ENCODE measurements at regions of chr5 and their contacts with region 1.

Region 1: DNA sequence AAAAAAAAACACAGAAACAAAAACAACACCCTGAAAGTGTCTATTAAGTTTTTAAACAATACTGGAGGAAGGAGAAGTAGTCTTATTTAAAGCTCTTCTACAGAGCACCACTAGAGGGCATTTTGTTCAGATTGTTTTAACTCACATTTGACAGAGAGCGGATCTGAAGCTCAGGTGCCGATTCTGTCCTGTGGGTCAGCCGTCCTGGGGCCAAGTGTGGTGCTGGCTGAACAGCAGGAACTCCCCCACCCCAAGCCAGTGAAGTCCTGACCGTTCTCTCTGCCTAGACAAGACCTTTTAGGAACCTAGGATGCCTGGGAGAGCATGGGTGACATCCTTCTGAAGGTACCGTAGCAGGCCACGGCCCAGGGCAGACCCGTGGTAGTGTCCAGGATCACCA is 3.9 kb downstream of the EXOC3 start:
- DNase-seq: peak; percentile 58
- H3K4me3 ChIP-seq: no peak overlapping the region
- H3K27ac ChIP-seq: no peak overlapping the region
- H3K4me1 ChIP-seq: peaks cover 0 to 17% of the 10 kb centered on the region in 2 experiments; a peak in 1 of 4 replicates
- H3K27me3 ChIP-seq: no peaks in the 10 kb centered on the region
- CTCF ChIP-seq: peak; percentile 69
- EP300 ChIP-seq: no peak
- RAD21 ChIP-seq: peak; percentile 28; the same call in 1 of the 2 replicates

Region 2: DNA sequence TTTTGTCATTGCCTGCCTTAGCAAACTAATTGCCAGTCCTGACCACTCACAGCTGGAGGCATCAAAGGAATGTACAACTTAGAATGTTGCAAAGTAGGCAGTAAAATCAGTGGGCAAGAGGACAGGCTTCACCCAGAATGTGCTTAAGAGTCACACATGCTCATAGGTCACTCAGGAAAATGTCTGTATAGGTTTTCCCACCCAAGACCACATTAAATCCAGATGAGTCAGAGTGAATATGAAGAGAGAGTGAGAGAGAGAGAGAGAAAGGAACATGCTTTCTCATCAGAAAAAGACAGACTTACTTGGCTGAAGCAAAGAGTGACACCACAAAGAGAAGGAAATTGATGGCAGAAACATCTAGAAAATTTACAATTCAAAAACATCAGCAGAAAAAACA is 317.0 kb before region 1 on chr5:
- CTCF ChIA-PET with region 1: no interaction called
- POLR2A ChIA-PET with region 1: no interaction called
- DNase-seq: no peak
- H3K4me3 ChIP-seq: no peak overlapping the region
- H3K27ac ChIP-seq: no peak overlapping the region
- H3K4me1 ChIP-seq: no peaks in the 10 kb centered on the region
- H3K27me3 ChIP-seq: no peaks in the 10 kb centered on the region
- CTCF ChIP-seq: no peak
- EP300 ChIP-seq: no peak
- RAD21 ChIP-seq: no peak

Region 3: DNA sequence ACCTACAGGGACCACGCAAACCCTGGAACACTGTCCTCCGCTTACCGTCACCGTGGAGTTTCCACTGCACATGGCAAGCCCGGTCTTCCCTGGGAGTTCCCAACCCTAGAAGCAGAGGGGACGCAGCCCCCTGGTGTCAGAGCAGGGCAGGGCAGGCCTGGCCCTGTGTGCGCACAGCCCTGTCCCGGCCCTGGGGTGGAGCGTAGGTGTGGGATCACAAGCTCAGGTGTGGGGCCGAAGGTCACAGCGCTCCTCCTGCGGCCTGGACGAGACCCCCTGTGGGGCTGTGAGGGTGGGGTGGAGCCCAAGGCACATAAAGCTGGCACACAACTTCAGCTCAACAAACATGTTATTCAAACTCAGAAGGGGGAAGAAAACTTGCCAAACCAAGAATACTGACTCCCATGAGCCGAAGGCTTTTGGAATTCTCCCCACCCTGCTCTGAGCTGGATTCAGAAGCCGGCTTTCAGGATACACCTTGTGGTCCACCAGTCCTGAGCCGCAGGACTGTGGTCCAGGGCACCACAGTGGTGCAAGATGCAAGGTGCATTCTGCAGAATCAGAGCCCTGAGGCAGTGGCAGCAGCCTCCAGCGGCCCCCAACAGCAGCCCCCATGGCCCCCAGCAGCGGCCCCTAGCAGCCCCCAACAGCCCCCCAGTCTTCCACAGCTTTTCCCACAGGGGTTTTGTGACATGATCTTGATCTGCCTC is 15.7 kb before region 1 on chr5:
- CTCF ChIA-PET with region 1: interaction called, 10 read pairs
- POLR2A ChIA-PET with region 1: no interaction called
- DNase-seq: peak; percentile 93
- H3K4me3 ChIP-seq: no peak overlapping the region; a peak in 1 of 4 replicates
- H3K27ac ChIP-seq: no peak overlapping the region
- H3K4me1 ChIP-seq: peaks cover 0 to 3% of the 10 kb centered on the region in 2 experiments; a peak in 1 of 4 replicates
- H3K27me3 ChIP-seq: no peaks in the 10 kb centered on the region
- CTCF ChIP-seq: peak; percentile 63
- EP300 ChIP-seq: no peak
- RAD21 ChIP-seq: peak; percentile 75

Region 4: DNA sequence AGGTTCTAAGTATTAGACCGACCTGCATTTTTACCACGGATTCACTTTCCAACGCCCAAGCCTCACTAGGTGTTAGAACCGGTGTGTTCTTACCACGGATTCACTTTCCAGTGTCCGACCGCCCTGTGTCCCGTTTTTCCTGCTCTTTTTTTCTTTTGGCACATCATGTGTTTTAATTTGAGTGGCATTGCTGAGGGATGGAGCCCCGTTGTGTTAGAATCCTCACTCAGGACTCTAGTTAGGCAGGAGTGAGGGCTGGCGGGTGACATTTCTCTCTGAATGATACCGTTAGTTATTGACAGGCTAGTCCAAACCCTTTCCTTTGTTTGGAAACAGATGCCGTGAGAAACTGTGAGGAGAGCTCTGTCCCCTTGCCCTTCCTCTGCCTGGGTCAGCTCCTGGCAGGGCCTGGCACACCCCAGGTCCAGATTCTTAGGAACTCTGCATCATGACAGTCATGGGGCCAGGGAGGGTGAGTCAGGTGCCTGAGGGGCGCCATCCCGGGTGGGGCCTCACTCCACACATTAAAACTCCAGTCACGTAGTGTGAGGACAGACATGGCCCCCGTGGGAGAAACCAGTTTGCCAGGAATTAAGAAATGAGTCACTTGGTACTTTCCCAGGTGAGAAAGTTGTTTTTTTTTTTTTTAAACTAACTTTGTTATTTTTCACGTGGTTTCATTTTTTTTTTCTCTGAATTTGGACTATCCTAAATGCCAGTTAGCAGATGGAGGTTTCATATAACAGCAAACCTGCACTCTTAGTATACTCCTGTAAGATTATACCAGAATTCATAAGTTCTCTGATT is 11.9 kb after region 1 on chr5:
- CTCF ChIA-PET with region 1: interaction called, 14 read pairs
- POLR2A ChIA-PET with region 1: no interaction called
- DNase-seq: no peak
- H3K4me3 ChIP-seq: no peak overlapping the region
- H3K27ac ChIP-seq: no peak overlapping the region
- H3K4me1 ChIP-seq: no peaks in the 10 kb centered on the region
- H3K27me3 ChIP-seq: no peaks in the 10 kb centered on the region
- CTCF ChIP-seq: no peak
- EP300 ChIP-seq: no peak
- RAD21 ChIP-seq: no peak

Region 5: GRCh38 chr5:472656-473553 is 26.0 kb after region 1 on chr5:
- CTCF ChIA-PET with region 1: interaction called, 10 read pairs
- POLR2A ChIA-PET with region 1: no interaction called
- DNase-seq: peak; percentile 99
- H3K4me3 ChIP-seq: peak overlapping the region; percentile 78 to 86
- H3K27ac ChIP-seq: peak overlapping the region; percentile 30 to 62; a peak in 1 of 4 replicates
- H3K4me1 ChIP-seq: peaks cover 0 to 21% of the 10 kb centered on the region in 2 experiments; a peak in 1 of 4 replicates
- H3K27me3 ChIP-seq: no peaks in the 10 kb centered on the region
- CTCF ChIP-seq: no peak
- EP300 ChIP-seq: no peak
- RAD21 ChIP-seq: no peak

Measured in SK-N-SH (cell line).